Endothelial cell of umbilical vein (primary cell): ENCODE measurements at regions of chr7 and their contacts with region 1.

Region 1: DNA sequence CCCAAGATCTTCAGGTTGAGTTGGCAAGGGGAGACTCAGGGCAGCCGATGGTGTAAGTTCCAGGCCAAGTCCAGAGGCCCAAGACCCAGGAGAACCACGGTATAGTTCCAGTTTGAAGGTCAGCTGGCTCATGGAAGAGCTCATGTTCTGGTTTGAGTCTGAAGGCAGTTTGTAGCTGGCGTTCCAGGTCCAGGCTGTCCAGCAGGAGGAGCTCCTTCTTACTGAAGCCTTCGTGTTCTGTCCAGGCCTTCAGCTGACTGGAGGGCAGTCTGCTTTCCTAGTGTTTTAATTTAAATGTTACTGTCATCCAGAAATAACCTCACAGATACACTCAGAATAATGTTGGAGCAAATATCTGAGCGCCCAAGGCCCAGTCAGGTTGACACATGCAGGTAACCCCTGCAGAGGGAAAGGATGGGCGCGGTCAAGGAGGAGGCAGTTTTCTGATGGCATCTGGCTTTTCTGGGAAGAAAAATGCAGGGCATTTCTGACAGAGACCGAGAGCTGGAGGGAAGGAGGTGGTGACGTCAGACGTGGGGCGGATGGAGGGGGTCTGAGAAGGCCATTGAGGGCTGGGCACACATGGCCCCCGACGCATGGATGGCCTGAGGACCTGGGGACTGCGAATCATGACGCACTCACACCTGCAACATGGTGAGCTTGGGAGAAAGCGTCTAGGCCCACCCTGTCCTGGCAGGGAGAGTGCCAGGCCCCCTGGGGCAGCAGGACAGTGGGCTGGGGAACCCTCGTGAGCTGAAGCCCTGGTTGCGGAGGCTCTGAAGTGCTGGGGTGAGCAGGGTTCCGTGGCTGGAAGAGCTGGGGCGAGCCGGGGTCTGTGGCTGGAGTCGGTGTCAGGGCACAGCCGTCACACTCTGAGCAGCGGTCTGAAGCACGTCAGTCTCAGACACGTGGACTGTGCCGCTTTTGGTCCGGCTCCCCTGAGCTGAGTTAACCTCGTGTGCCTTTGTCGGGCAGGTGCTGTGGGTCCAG is 4.4 kb downstream of the SUN1 start:
- DNase-seq: peak; percentile 60
- H3K4me3 ChIP-seq: no peak overlapping the region
- H3K27ac ChIP-seq: no peak overlapping the region
- H3K4me1 ChIP-seq: peaks cover 14% of the 10 kb centered on the region
- H3K27me3 ChIP-seq: no peaks in the 10 kb centered on the region
- CTCF ChIP-seq: peak; percentile 67 to 77
- POLR2A ChIP-seq: no peak

Region 2: GRCh38 chr7:826245-826917 is 10.3 kb before region 1 on chr7:
- CTCF ChIA-PET with region 1: interaction called, 10 read pairs
- POLR2A ChIA-PET with region 1: no interaction called
- dilution Hi-C with region 1: no loop called
- intact Hi-C with region 1: no loop called
- DNase-seq: no peak
- H3K4me3 ChIP-seq: no peak overlapping the region
- H3K27ac ChIP-seq: no peak overlapping the region
- H3K4me1 ChIP-seq: peaks cover 6% of the 10 kb centered on the region
- H3K27me3 ChIP-seq: no peaks in the 10 kb centered on the region
- CTCF ChIP-seq: no peak
- POLR2A ChIP-seq: no peak

Region 3: DNA sequence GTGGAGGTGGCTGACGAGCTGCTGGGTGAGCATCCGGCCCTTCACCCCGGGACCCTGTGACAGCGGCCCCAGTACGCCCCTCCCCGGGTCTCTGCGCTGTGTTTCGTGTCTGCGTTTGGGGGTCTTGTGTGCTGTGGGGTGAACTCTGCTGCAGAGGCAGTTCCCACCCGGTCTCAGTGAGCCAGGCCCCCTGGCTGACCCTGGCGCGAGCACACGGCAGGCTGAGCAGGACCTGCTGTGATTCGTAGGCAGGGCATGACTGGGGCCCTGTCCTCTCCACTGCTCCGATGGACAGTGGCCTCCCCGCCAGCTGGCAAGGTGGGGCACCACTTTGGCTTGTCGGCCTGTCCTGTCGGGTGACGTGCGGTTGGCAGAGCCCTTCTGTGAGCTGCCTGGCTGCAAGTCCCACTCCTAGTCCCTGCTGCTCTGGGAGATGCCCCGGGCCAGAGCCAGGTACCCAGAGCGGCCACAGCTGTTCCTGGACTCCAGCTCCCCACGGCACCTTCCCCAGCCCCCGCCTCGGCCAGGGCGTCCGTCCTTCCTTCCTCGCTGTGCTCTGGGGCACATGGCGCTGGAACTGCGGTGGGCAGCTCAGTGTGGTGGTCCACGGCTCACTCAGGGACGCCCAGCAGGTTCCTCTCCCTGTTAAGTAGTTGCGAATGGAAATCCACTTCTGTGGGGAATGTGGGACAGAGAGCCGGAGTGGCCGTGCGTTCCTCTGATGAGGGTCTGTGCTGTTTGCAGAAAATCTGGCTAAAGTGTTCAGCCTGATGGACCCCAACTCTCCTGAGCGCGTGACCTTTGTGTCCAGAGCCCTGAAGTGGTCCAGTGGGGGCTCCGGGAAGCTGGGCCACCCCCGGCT is 50.2 kb after region 1 on chr7:
- CTCF ChIA-PET with region 1: no interaction called
- POLR2A ChIA-PET with region 1: no interaction called
- dilution Hi-C with region 1: no loop called
- intact Hi-C with region 1: no loop called
- DNase-seq: no peak
- H3K4me3 ChIP-seq: no peak overlapping the region
- H3K27ac ChIP-seq: no peak overlapping the region
- H3K4me1 ChIP-seq: no peaks in the 10 kb centered on the region
- H3K27me3 ChIP-seq: no peaks in the 10 kb centered on the region
- CTCF ChIP-seq: no peak
- POLR2A ChIP-seq: no peak